Breast epithelium (tissue), 4 donors: ENCODE measurements at regions of chr13 and their contacts with region 1.

Region 1: GRCh38 chr13:42039946-42040729 is 8.3 kb upstream of the DGKH start:
- DNase-seq: peak; percentile 84 to 91
- H3K4me3 ChIP-seq: peak overlapping the region; percentile 81 to 92 (median 85)
- H3K27ac ChIP-seq: peak overlapping the region; percentile 94 to 96
- H3K4me1 ChIP-seq: no peaks in the 10 kb centered on the region
- H3K27me3 ChIP-seq: no peaks in the 10 kb centered on the region
- CTCF ChIP-seq: peak in 1 of 3 donors; percentile 33
- POLR2A ChIP-seq: no peak

Region 2: DNA sequence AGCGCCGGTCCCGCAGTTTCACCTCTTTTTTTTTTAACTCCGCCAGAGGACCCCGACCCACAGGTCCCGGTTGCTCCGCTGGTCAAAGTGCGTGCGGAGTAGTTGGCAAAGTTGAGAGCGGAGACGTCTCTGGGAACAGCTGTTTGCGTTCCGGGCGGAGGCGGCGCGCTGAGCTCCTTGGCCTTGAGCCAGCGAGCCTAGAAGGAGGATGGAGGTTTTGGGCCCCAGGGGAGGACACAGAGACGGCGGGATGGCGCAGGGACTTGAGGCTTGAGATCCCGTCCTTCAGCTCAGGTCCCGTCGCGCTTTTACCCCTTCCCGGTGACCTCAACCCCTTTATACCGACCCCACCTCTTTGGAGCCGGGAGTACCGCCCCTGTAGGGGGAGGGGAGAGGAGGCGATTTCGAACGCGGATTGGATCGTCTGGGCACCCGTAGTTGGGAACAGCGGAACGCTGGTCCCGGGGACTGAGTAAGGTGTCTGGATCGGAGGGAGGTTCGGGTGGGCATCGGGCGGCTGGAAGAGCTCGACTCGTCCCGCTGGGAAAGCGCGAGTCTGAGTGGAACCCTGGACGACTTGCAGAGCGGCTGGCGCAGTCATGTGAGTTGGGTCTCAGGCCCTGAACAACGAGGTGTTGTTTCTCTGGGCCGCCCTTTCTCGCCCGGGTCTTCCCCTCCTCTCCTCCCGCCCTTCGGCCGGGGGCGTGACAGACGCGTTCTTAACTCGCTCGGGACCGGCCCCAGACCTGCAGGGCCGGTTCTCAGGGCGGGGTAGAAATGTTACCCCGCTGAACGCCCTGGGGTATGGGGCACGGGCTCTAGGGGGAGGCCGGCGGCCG is 978.8 kb before region 1 on chr13 and contains the start of gene WBP4:
- intact Hi-C with region 1: loop called (anchors 5 kb)
- DNase-seq: peak; percentile 94
- H3K4me3 ChIP-seq: peak within 1 kb of the TSS; percentile 64 to 88 (median 84)
- H3K27ac ChIP-seq: peak within 1 kb of the TSS; percentile 96 to 99
- H3K4me1 ChIP-seq: peaks cover 0 to 24% of the 10 kb centered on the region in 2 donors
- H3K27me3 ChIP-seq: no peaks in the 10 kb centered on the region
- CTCF ChIP-seq: peak in 2 of 3 donors; percentile 11 to 19
- POLR2A ChIP-seq: peak; percentile 81
- total RNA-seq, gene WBP4: 12.7 to 16.5 (median 13.1) TPM

Region 3: DNA sequence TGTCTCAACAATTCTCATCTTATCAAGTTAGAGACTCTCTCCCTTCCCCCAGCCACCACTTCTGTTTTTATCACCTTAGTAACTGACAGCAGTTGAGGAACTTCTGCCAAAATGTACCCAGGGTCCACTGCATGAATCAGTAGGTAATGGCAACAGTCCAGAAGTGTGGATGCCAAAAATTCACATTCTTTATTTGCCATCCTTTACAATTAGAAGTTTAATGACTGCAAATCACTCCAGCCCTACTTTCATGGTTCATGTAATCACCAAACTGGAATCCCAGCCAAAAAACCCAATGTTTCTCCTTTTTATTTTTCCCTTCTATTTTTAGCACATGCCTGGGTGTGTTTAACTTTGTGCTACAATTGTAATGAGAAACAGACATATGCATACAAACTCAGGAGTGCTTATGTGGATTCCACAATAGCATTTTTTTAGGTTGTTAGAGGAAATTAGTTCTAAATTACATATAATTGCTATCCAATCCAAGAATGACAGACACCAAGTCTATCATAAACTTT is 339.3 kb before region 1 on chr13:
- intact Hi-C with region 1: loop called (anchors 10 kb)
- DNase-seq: no peak
- H3K4me3 ChIP-seq: no peak overlapping the region
- H3K27ac ChIP-seq: no peak overlapping the region
- H3K4me1 ChIP-seq: no peaks in the 10 kb centered on the region
- H3K27me3 ChIP-seq: no peaks in the 10 kb centered on the region
- CTCF ChIP-seq: no peak
- POLR2A ChIP-seq: no peak

Region 4: DNA sequence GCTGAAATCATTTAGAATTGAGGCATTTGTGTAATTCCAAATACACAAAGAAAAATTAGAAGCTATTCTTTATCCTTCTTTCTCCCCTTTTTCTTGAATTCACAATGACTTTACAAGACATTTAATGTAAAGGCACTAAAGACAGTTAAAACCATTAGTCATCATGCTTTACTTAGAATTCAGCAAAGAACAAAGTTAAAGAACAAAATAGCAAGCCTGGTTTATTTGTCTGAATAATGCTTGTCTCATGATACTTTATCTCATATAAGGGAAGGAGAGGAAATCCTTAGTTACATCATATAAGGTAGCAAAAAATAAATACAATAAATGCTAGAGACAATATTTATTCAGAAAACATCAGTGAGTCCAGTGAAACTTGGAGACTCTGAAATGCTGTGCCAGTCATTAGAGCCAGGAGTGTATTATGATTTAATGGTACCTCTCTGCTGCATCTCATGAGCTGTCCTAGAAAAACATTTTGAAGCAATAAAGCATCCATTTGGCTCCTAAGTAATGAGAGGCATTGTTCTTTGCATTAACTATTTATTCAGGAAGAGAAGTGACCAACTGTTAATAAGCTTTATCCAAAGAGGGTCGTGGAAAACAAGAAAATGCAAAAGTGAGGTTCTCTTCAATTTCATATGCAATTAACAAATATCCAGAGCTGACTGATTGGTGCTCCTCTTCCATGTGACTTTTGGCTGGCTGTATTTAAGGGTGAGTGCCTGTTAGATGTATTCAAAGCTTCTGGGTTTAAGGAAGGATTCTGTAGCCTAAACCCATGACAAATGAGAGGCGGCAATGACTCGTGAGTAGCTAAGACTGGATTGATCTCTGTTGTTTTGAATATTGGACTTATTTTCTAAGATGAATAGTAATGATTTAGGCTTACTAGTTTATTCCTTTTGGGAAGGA is 113.3 kb after region 1 on chr13:
- intact Hi-C with region 1: no loop called
- DNase-seq: no peak
- H3K4me3 ChIP-seq: no peak overlapping the region
- H3K27ac ChIP-seq: no peak overlapping the region
- H3K4me1 ChIP-seq: no peaks in the 10 kb centered on the region
- H3K27me3 ChIP-seq: no peaks in the 10 kb centered on the region
- CTCF ChIP-seq: no peak
- POLR2A ChIP-seq: no peak